ENCODE measurements at regions of chr1 and their contacts with region 1.

Region 1: GRCh38 chr1:151934048-151934493 is 24.8 kb upstream of the THEM4 start:
- DNase-seq: peak; percentile 69 to 81 (median 74)
- H3K4me3 ChIP-seq: peak overlapping the region in 1 of 7 experiments; percentile 42
- H3K27ac ChIP-seq: no peak overlapping the region
- H3K4me1 ChIP-seq: peaks cover 0 to 9% (median 3%) of the 10 kb centered on the region in 4 experiments
- H3K27me3 ChIP-seq: no peaks in the 10 kb centered on the region

Region 2: GRCh38 chr1:151888972-151889570 is 45.0 kb before region 1 on chr1:
- CTCF ChIA-PET with region 1: interaction called, 51 read pairs
- POLR2A ChIA-PET with region 1: no interaction called
- DNase-seq: peak; percentile 26 to 46 (median 44)
- H3K4me3 ChIP-seq: no peak overlapping the region
- H3K27ac ChIP-seq: no peak overlapping the region
- H3K4me1 ChIP-seq: no peaks in the 10 kb centered on the region
- H3K27me3 ChIP-seq: no peaks in the 10 kb centered on the region

Region 3: DNA sequence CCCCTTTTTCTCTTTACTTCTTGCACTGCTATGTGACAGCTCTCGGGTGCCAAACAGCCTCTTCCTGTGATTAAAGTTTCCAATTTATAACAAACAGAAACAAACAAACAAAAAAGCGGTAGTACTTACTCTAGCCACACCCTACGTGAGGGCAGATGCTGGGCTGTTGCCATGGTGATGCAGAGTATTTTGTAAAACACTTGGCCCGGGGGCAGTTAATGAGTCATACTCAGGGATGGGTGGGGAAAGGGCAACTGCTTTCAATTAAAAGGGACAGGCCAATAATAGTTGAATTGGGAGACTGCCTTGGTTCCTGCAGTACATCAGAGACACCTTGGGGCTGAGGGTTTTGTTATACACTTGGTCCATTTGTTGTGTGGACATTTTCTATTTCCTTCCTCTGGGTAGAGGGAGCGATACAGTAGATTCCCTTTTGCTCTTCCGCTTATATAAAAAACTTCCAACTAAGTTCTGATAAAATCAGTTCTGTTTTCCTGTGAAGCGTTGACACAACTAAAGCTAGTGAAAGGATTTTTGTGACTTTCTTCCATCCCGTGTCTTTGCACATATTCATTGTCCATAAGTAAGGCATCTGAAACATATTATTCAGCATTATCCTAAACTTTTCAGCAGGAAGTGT is 11.8 kb after region 1 on chr1:
- CTCF ChIA-PET with region 1: interaction called, 28 read pairs
- POLR2A ChIA-PET with region 1: no interaction called
- DNase-seq: peak; percentile 99 to 100 (median 99)
- H3K4me3 ChIP-seq: peak overlapping the region in 1 of 7 experiments; percentile 54
- H3K27ac ChIP-seq: peak overlapping the region; percentile 80 to 93
- H3K4me1 ChIP-seq: peaks cover 2 to 50% (median 26%) of the 10 kb centered on the region in 4 experiments
- H3K27me3 ChIP-seq: no peaks in the 10 kb centered on the region

Region 4: GRCh38 chr1:151976858-151977257 is 42.8 kb after region 1 on chr1:
- CTCF ChIA-PET with region 1: interaction called, 10 read pairs
- POLR2A ChIA-PET with region 1: no interaction called
- DNase-seq: no peak
- H3K4me3 ChIP-seq: no peak overlapping the region
- H3K27ac ChIP-seq: no peak overlapping the region
- H3K4me1 ChIP-seq: peaks cover 0 to 12% (median 7%) of the 10 kb centered on the region in 4 experiments
- H3K27me3 ChIP-seq: peaks cover 0 to 15% (median 2%) of the 10 kb centered on the region in 5 experiments

Region 5: DNA sequence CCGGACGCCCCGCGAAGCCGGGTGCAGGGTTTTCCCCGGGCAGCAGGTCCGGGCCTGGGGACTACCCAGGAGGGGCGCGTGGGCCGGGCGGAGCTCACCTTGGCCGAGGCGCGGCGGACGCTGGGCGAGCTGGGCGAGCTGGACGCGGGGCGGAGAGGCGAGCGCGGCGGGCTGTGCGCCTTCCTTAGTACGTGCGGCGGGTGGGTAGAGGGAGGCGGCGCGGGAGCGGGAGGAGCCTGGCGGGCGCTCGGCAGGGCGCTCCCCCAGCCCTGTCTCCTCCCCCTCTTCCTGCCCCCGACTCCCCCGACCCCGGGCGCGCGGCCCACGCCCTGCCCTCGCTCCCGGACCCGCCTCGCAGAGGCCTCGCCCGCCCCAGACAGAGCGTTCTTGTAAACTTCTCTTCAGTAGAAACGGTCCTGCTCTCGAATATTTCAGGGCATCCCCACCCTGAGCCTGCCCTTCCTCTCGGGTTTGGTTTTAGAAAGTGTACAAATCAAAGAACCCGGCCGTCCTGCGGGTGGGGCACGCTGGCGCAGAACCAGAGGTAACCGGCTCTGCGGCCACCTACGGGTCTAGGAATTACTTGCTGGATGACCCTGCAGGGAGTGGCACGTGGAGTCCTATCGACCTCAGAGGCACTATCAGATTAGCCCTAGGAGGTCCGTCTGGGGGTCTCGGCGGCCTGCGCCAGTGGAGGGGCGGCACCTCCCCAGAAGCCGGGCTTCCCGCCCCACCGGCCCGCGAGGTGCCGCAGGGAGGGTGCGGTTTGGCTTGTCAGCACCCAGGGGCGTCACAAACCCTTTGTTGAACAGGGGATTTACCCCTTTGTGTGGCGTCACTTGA is 59.8 kb after region 1 on chr1 and contains the start of gene S100A10:
- CTCF ChIA-PET with region 1: interaction called, 183 read pairs
- POLR2A ChIA-PET with region 1: no interaction called
- DNase-seq: peak; percentile 50 to 77 (median 70)
- H3K4me3 ChIP-seq: peak within 1 kb of the TSS; percentile 28 to 86 (median 72)
- H3K27ac ChIP-seq: peak within 1 kb of the TSS in 1 of 2 experiments; percentile 7
- H3K4me1 ChIP-seq: peaks cover 0 to 31% (median 22%) of the 10 kb centered on the region in 4 experiments
- H3K27me3 ChIP-seq: peaks cover 0 to 46% (median 5%) of the 10 kb centered on the region in 5 experiments

Measured in common myeloid progenitor, CD34-positive (primary cell).